IMR-90 (cell line): ENCODE measurements at regions of chr10 and their contacts with region 1.

Region 1: GRCh38 chr10:88932539-88933256 is 19.9 kb downstream of the ACTA2 start:
- DNase-seq: peak; percentile 87
- ATAC-seq: peak; percentile 74
- H3K4me3 ChIP-seq: no peak overlapping the region
- H3K27ac ChIP-seq: peak overlapping the region; percentile 52
- H3K4me1 ChIP-seq: peaks cover 4% of the 10 kb centered on the region
- H3K27me3 ChIP-seq: no peaks in the 10 kb centered on the region
- CTCF ChIP-seq: peak; percentile 95
- POLR2A ChIP-seq: no peak
- RAD21 ChIP-seq: peak; percentile 91

Region 2: GRCh38 chr10:88565072-88565471 is 367.6 kb before region 1 on chr10:
- CTCF ChIA-PET with region 1: no interaction called
- POLR2A ChIA-PET with region 1: no interaction called
- dilution Hi-C with region 1: no loop called
- in situ Hi-C with region 1: no loop called
- intact Hi-C with region 1: loop called (anchors 5 kb)
- DNase-seq: peak; percentile 61
- ATAC-seq: peak; percentile 85
- H3K4me3 ChIP-seq: no peak overlapping the region
- H3K27ac ChIP-seq: no peak overlapping the region
- H3K4me1 ChIP-seq: no peaks in the 10 kb centered on the region
- H3K27me3 ChIP-seq: no peaks in the 10 kb centered on the region; the same call in 1 of the 2 replicates
- CTCF ChIP-seq: peak; percentile 63
- POLR2A ChIP-seq: no peak
- RAD21 ChIP-seq: peak; percentile 74

Region 3: DNA sequence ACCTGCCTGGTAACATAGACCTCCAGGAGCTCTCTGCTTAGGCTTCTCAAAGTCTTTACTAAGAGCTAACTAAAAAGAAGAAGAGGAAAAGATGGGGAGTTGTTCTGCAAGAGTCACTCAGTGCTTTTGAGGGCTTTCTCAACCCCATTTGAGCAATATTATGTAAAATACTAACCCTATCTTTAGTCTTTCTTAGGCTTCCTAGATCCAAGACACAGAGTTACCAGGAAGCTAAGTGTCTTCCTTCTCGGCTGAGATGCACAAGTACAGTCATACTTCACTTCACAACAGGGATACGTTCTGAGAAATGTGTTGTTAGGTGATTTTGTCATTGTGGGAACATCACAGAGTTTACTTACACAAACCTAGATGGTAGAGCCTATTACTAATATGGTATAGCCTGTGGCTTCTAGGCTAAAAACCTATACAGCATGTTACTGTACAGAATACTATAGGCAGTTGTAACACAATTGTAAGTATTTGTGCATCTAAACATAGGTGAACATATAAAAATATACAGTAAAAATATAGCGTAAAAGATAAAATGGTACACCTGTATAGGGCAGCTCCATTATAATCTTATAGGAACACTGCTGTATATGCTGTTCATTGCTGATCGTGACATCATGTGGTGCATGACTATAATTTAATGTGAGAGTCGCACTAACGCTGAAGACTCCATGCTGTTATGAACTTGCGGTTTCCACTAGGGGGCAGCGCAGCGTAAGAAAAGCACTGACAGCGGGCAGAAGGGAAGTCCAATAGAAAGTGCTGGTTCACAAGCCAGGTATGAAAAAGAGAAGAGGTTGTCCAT is 97.4 kb before region 1 on chr10:
- CTCF ChIA-PET with region 1: interaction called, 36 read pairs
- POLR2A ChIA-PET with region 1: interaction called, 3 read pairs
- dilution Hi-C with region 1: no loop called
- in situ Hi-C with region 1: loop called (anchors 5 kb)
- intact Hi-C with region 1: loop called (anchors 1 kb)
- DNase-seq: peak; percentile 89
- ATAC-seq: peak; percentile 98
- H3K4me3 ChIP-seq: no peak overlapping the region
- H3K27ac ChIP-seq: no peak overlapping the region
- H3K4me1 ChIP-seq: no peaks in the 10 kb centered on the region
- H3K27me3 ChIP-seq: no peaks in the 10 kb centered on the region
- CTCF ChIP-seq: peak; percentile 96
- POLR2A ChIP-seq: peak; percentile 38
- RAD21 ChIP-seq: peak; percentile 99

Region 4: GRCh38 chr10:88880282-88881076 is 52.2 kb before region 1 on chr10:
- CTCF ChIA-PET with region 1: interaction called, 4 read pairs
- POLR2A ChIA-PET with region 1: interaction called, 11 read pairs
- dilution Hi-C with region 1: no loop called
- in situ Hi-C with region 1: no loop called
- intact Hi-C with region 1: loop called (anchors 2 kb)
- DNase-seq: peak; percentile 80
- ATAC-seq: peak; percentile 81
- H3K4me3 ChIP-seq: peak overlapping the region; percentile 90
- H3K27ac ChIP-seq: peak overlapping the region; percentile 98
- H3K4me1 ChIP-seq: peaks cover 14% of the 10 kb centered on the region
- H3K27me3 ChIP-seq: no peaks in the 10 kb centered on the region
- CTCF ChIP-seq: peak; percentile 21
- POLR2A ChIP-seq: peak; percentile 54; the same call in 1 of the 2 replicates
- RAD21 ChIP-seq: no peak

Region 5: GRCh38 chr10:88944813-88945212 is 12.1 kb after region 1 on chr10:
- CTCF ChIA-PET with region 1: interaction called, 6 read pairs
- POLR2A ChIA-PET with region 1: interaction called, 19 read pairs
- dilution Hi-C with region 1: no loop called
- in situ Hi-C with region 1: no loop called
- intact Hi-C with region 1: no loop called
- DNase-seq: no peak
- ATAC-seq: no peak
- H3K4me3 ChIP-seq: no peak overlapping the region
- H3K27ac ChIP-seq: no peak overlapping the region
- H3K4me1 ChIP-seq: peaks cover 5% of the 10 kb centered on the region
- H3K27me3 ChIP-seq: no peaks in the 10 kb centered on the region
- CTCF ChIP-seq: no peak
- POLR2A ChIP-seq: no peak
- RAD21 ChIP-seq: no peak

Region 6: DNA sequence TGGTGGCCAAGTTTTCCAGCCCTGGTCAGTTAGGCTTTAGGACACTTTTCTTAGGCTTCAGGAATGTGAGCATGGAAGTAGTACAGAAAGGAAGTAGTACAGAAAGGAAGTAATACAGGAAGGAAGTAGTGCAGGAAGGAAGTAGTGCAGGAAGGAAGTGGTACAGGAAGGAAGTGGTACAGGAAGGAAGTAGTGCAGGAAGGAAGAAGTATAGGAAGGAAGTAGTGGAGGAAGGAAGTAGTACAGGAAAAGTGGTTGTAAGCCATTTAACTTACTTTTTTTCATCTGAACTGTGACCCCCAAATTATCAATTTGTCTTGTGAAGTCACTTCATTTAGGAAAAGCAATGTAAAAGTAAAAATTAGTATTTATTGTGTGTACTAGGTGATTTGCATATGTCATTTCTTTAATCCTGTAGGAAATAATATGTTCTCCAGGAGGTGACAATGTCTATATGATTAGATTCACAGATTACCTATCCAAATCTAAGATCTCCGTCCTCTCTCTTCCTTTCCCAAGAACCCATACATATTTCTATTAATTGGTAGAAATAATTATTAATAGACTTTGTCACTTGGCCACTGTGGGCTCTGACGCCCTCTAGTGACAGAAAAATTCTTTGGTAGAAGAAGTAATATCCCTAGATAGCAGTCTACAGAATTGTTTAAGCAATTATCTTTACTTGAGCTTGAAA is 54.0 kb after region 1 on chr10:
- CTCF ChIA-PET with region 1: interaction called, 12 read pairs
- POLR2A ChIA-PET with region 1: no interaction called
- dilution Hi-C with region 1: no loop called
- in situ Hi-C with region 1: no loop called
- intact Hi-C with region 1: loop called (anchors 1 kb)
- DNase-seq: peak; percentile 37
- ATAC-seq: no peak
- H3K4me3 ChIP-seq: no peak overlapping the region
- H3K27ac ChIP-seq: no peak overlapping the region
- H3K4me1 ChIP-seq: peaks cover 8% of the 10 kb centered on the region
- H3K27me3 ChIP-seq: no peaks in the 10 kb centered on the region
- CTCF ChIP-seq: peak; percentile 82
- POLR2A ChIP-seq: no peak
- RAD21 ChIP-seq: peak; percentile 77

Region 7: DNA sequence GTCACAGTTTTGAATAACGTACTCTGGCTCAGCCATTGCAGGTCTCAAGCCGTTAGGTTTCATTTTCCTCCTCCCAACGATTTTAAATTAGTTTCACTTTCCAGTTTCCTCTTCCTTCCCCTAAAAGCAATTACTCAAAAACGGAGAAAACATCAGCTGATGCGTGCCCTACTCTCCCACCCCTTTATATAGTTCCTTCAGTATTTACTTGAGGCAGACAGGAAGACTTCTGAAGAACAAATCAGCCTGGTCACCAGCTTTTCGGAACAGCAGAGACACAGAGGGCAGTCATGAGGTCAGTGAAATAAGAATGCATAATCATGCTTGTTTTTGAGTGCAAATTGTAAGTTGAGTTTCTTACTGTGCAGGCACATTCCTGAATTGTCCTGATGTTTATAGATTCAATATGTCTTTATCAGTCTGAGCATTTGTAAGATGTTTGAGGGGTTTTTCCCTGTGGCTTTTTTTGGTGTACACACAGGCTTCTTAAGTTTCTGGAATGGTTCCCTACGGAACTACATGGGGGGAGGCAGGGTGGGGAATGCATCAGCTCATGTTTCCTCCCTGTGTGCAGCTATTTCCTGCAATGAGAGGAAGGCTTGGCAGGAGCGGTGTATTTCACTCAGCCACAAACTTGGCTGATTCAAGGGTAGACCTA is 395.2 kb after region 1 on chr10 and contains the start of gene IFIT3:
- CTCF ChIA-PET with region 1: no interaction called
- POLR2A ChIA-PET with region 1: no interaction called
- dilution Hi-C with region 1: no loop called
- in situ Hi-C with region 1: no loop called
- intact Hi-C with region 1: no loop called
- DNase-seq: peak; percentile 96
- ATAC-seq: peak; percentile 92
- H3K4me3 ChIP-seq: peak within 1 kb of the TSS; percentile 54
- H3K27ac ChIP-seq: peak within 1 kb of the TSS; percentile 88
- H3K4me1 ChIP-seq: peaks cover 7% of the 10 kb centered on the region
- H3K27me3 ChIP-seq: no peaks in the 10 kb centered on the region
- CTCF ChIP-seq: no peak
- POLR2A ChIP-seq: no peak
- RAD21 ChIP-seq: no peak
- total RNA-seq, gene IFIT3: 7.3 and 7.8 TPM in 2 replicates

Region 8: GRCh38 chr10:89373916-89374711 is 441.4 kb after region 1 on chr10:
- CTCF ChIA-PET with region 1: no interaction called
- POLR2A ChIA-PET with region 1: no interaction called
- dilution Hi-C with region 1: no loop called
- in situ Hi-C with region 1: no loop called
- intact Hi-C with region 1: no loop called
- DNase-seq: peak; percentile 94
- ATAC-seq: peak; percentile 93
- H3K4me3 ChIP-seq: no peak overlapping the region
- H3K27ac ChIP-seq: peak overlapping the region; percentile 88; the same call in 1 of the 2 replicates
- H3K4me1 ChIP-seq: peaks cover 9% of the 10 kb centered on the region
- H3K27me3 ChIP-seq: no peaks in the 10 kb centered on the region
- CTCF ChIP-seq: no peak
- POLR2A ChIP-seq: no peak
- RAD21 ChIP-seq: no peak